Esophagus muscularis mucosa (tissue), 4 donors: ENCODE measurements at regions of chr11 and their contacts with region 1.

Region 1: DNA sequence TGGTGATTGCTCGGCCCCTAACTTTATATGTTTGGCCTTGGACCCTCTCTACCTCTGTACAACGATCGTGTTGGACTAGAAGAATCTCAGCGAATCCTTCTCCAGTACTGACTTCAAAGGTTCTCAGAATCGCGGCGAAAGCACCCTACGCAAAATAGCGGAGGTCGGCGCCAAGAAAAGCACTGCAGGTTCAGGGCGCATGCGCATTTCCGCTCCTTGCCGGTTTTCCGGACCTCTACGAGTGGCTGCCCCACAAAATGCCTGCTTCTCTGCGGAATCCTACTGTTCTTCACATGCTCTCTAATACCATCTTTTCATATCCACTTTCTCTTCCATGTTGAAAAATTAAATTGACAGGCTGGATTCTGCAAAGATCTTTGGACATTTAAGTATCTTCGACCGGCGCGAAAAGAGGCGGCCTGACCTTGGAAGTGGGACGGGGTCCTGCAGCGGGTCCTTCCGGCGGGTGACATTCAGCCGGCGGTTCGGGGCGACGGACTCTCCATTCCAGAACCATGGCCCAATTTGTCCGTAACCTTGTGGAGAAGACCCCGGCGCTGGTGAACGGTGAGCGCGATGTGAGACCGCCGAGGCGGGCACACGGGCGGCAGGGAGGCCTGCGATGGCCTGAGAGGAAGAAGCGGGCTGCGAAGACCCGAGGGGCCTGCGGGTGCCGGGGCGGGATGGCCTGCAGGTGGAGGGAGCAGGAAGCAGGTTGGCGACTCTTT is at the start of gene ATP5MG:
- DNase-seq: peak; percentile 94
- H3K4me3 ChIP-seq: peak within 1 kb of the TSS; percentile 72 to 95 (median 86)
- H3K27ac ChIP-seq: peak within 1 kb of the TSS; percentile 80 to 89 (median 86)
- H3K4me1 ChIP-seq: peaks cover 38 to 49% (median 48%) of the 10 kb centered on the region in 4 donors
- H3K27me3 ChIP-seq: no peaks in the 10 kb centered on the region
- CTCF ChIP-seq: peak in 1 of 3 experiments; percentile 19
- EP300 ChIP-seq: no peak
- POLR2A ChIP-seq: peak; percentile 76
- total RNA-seq, gene ATP5MG: 61.0 to 91.1 (median 69.1) TPM

Region 2: GRCh38 chr11:118435893-118436624 is 34.7 kb after region 1 on chr11 and contains the start of gene KMT2A:
- intact Hi-C with region 1: loop called (anchors 5 kb)
- DNase-seq: peak; percentile 98
- H3K4me3 ChIP-seq: peak within 1 kb of the TSS; percentile 92 to 99 (median 96)
- H3K27ac ChIP-seq: peak within 1 kb of the TSS; percentile 93 to 96 (median 94)
- H3K4me1 ChIP-seq: peaks cover 45 to 57% (median 53%) of the 10 kb centered on the region in 4 donors
- H3K27me3 ChIP-seq: no peaks in the 10 kb centered on the region
- CTCF ChIP-seq: peak in 1 of 3 experiments; percentile 88
- EP300 ChIP-seq: no peak
- POLR2A ChIP-seq: no peak
- total RNA-seq, gene KMT2A: 61.0 to 68.7 (median 62.1) TPM

Region 3: GRCh38 chr11:118503216-118503615 is 101.9 kb after region 1 on chr11:
- intact Hi-C with region 1: loop called (anchors 5 kb)
- DNase-seq: no peak
- H3K4me3 ChIP-seq: no peak overlapping the region
- H3K27ac ChIP-seq: no peak overlapping the region
- H3K4me1 ChIP-seq: no peaks in the 10 kb centered on the region
- H3K27me3 ChIP-seq: no peaks in the 10 kb centered on the region
- CTCF ChIP-seq: no peak
- EP300 ChIP-seq: no peak
- POLR2A ChIP-seq: no peak